Breast epithelium (tissue), 4 donors: ENCODE measurements at regions of chr4 and their contacts with region 1.

Region 1: DNA sequence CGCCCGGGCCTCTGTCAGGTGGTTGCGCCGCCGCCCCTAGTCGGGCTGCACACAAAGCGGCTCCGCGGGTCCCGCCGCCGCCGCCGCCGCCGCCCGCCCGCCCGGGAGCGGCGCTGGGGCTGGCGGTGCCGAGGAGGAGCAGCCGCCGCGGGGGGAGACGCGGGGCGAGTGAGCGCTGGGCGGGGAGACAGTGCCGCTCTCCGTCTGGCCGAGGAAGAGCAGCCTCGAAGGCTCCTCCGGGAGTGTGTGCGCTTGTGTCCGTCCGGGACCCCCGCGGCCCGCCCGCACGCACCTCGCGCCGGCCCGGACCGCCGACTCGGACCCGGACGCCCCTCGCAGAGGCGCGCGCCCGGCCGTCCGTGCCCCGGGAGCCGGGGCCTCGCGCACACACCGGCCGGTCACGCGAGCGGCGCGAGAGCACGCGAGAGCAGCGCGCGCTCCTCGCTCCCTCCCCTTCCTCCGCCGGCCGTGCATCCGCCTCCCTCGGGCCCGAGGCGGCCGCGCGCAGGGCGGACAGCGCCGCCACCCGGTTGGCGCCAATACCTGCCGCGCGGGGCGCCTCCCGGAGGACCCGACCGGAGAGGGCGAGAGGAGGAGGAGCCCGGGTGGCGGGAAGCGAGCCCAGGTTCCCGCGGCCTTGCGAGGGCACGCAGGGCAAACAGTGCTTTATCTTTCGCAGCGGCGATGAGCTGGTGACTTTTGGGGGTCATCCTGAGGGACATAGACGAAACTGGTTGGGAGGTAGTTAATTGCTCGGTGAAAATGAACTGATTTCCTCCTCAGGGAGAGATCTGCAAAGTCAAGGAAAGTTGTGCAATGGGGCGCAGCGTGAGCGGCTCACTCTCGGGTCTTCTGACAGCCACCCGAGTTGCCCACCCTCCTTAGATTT is at the start of gene PDS5A:
- DNase-seq: peak; percentile 80 to 85
- H3K4me3 ChIP-seq: peak within 1 kb of the TSS; percentile 93 to 97 (median 96)
- H3K27ac ChIP-seq: peak within 1 kb of the TSS; percentile 94 to 97
- H3K4me1 ChIP-seq: peaks cover 0 to 8% of the 10 kb centered on the region in 2 donors
- H3K27me3 ChIP-seq: no peaks in the 10 kb centered on the region
- CTCF ChIP-seq: peak; percentile 58 to 96 (median 75)
- POLR2A ChIP-seq: no peak
- total RNA-seq, gene PDS5A: 69.9 to 106 (median 82.9) TPM

Region 2: DNA sequence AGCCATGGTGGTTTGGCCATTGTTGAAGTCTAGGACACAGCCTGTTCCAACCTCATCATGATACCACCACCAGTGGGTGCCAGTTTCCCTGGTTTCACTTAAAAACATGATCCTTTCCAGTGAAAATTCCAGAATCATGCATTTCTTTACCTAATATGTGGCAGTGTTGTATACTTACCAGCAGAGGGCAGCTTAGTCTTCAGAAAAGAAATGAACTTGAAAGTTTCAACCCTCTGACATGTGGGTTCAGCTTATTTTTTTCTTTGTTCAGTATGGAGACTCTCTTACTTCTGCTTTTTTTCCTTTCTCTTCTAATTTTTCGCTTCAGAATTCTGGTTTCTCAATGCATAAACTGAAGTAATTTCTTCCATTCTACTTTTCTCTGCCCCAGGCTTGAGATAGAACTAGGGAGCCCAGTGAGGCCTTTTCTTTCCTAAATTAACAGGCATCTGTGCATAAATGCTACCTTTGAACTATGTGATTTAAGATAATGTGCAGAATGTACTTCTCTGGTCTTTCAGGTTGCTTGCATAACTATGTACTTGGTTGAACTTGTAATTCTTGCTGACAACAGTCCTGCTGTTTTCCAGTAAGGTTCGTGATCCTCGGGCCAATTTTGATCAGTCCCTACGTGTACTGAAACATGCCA is 508.2 kb before region 1 on chr4:
- intact Hi-C with region 1: loop called (anchors 10 kb)
- DNase-seq: no peak
- H3K4me3 ChIP-seq: no peak overlapping the region
- H3K27ac ChIP-seq: peak overlapping the region; percentile 20 to 72
- H3K4me1 ChIP-seq: no peaks in the 10 kb centered on the region
- H3K27me3 ChIP-seq: no peaks in the 10 kb centered on the region
- CTCF ChIP-seq: peak; percentile 69 to 90 (median 77)
- POLR2A ChIP-seq: no peak

Region 3: GRCh38 chr4:39697740-39698423 is 279.9 kb before region 1 on chr4 and contains the start of gene UBE2K:
- intact Hi-C with region 1: loop called (anchors 10 kb)
- DNase-seq: peak; percentile 72 to 79
- H3K4me3 ChIP-seq: peak within 1 kb of the TSS; percentile 91 to 99 (median 93)
- H3K27ac ChIP-seq: peak within 1 kb of the TSS; percentile 95 to 98
- H3K4me1 ChIP-seq: peaks cover 0 to 12% of the 10 kb centered on the region in 2 donors
- H3K27me3 ChIP-seq: no peaks in the 10 kb centered on the region
- CTCF ChIP-seq: no peak
- POLR2A ChIP-seq: peak; percentile 44
- total RNA-seq, gene UBE2K: 28.5 to 31.0 (median 29.9) TPM

Region 4: GRCh38 chr4:41232406-41232805 is 1254.7 kb after region 1 on chr4:
- intact Hi-C with region 1: no loop called
- DNase-seq: no peak
- H3K4me3 ChIP-seq: no peak overlapping the region
- H3K27ac ChIP-seq: no peak overlapping the region
- H3K4me1 ChIP-seq: no peaks in the 10 kb centered on the region
- H3K27me3 ChIP-seq: no peaks in the 10 kb centered on the region
- CTCF ChIP-seq: no peak
- POLR2A ChIP-seq: no peak